HEK293 (cell line): ENCODE measurements at regions of chr6 and their contacts with region 1.

Region 1: DNA sequence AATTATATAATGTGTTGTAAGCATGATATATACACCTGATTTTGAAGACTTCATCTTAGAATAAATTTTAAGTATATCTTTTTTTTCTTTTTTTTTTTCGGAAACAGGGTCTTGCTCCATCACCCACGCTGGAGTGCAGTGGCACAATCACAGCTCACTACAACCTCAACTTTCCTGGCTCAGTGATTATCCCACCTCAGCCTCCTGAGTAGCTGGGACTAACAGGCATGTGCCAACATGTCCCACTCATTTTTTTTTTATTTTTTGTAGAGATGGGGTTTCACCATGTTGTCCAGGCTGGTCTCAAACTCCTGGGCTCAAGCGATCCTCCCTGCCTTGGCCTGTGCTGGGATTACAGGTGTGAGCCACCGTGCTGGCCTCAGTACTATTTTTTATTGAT is 17.1 kb downstream of the VPS52 start:
- H3K4me3 ChIP-seq: no peak overlapping the region
- H3K27ac ChIP-seq: peak overlapping the region; percentile 50; the same call in 1 of the 2 replicates
- H3K4me1 ChIP-seq: peaks cover 5% of the 10 kb centered on the region
- CTCF ChIP-seq: no peak

Region 2: DNA sequence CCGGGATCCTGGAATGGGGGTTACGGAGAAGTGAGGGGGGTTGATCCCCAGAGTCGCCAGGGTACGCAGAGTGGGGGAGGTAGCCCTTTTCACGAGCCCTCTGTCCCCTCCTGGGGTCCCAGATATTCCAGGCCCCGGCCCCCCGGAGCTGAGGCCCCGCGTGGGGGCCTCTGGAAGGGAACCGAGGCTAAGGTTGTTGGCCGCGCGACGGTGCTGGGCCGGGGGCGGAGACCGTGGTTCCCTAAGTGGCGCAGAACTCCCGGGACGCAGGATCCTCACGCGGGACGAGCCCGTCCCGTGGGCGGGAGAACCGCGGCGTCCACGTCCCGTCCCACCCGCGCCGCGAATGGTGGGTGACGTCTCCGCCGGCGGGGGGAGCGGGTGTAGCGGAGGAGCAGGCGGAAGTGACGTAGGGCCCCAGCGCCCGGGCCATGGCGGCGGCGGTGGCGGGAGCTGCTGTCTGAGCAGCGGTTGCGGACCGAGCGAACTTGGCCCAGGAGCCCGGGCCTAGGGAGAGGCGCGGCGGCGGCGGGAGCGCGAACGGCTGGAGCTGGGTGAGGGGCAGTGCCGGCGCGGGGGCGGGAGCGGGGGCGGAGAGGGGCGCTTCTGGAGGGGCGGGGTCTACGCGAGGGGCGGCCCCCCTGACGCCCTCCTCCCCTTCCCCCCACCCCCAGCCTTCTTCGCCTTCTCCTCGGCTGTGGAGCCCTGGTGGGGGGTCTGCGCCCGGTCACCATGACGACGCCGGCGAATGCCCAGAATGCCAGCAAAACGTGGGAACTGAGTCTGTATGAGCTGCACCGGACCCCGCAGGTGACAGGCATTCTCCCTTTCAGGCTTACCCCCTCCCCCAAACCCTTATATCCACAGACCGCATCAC is 46.3 kb before region 1 on chr6 and contains the start of gene RING1:
- CTCF ChIA-PET with region 1: interaction called, 30 read pairs
- POLR2A ChIA-PET with region 1: interaction called, 30 read pairs
- H3K4me3 ChIP-seq: peak within 1 kb of the TSS; percentile 88
- H3K27ac ChIP-seq: peak within 1 kb of the TSS; percentile 95
- H3K4me1 ChIP-seq: peaks cover 21% of the 10 kb centered on the region
- CTCF ChIP-seq: no peak; the same call in 1 of the 2 replicates